Right ventricle myocardium inferior (tissue), 1 donor: ENCODE measurements at regions of chr21 and their contacts with region 1.

Region 1: DNA sequence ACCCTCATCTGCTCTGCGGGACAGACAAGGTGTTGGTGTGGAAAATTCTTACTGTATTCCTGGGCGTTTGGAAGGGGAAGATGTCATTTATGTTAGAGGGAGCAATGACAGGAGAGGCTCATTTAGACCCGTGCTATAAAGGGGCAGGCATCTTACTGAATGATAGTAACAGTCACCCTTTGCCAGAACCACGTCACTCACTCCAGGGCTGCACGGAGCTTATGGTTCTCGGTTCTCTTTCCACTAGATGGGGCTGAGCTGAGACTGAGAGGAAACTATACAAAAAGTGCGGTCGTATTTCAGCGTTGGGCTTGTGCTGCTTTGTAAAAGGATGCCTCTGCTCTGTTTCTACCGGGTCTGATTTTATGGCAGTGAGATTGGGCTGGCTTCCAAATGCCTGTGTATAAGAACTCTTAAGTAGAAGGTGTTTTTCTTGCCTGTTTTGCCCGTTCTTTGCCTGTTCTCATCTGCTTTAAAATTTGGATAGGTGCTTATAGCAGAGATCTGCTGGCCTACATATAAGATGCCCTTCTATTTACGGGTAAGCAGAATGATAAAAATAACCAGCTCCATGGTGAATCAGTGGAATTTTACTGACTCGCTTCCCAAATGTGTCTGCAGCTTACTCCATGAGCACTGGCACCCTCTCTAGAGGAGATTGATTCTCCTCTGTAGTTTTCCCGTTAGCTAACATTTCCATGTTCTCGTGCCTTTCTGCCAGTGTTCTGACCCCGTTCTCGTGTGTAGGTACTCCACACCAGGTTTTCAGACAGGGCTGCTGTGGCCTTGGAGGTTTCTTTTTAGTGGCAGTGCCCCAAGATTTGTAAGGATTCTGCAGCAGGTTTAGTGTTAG is 55.9 kb downstream of the MRPS6 start:
- DNase-seq: no peak
- ATAC-seq: peak; percentile 93

Region 2: DNA sequence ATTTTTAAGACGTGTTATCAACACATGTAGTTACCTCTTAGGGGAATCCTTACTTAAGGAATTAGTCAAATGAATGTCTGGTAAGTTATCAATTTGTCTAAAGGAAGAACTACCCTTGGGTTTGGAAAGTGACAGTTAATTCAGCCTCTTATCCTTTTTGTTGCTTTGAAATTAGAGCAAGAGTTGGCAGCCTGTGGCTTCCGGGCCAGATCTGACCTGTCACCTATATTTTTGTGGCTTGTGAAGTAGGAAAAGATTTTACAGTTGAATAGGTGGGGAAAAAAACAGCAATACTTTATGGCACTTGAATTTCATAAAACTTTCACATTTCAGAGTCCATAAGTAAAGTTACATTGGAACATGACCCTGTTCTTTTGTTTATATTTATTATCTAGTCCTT is 50.4 kb before region 1 on chr21:
- intact Hi-C with region 1: loop called (anchors 5 kb)
- DNase-seq: no peak
- ATAC-seq: no peak

Region 3: DNA sequence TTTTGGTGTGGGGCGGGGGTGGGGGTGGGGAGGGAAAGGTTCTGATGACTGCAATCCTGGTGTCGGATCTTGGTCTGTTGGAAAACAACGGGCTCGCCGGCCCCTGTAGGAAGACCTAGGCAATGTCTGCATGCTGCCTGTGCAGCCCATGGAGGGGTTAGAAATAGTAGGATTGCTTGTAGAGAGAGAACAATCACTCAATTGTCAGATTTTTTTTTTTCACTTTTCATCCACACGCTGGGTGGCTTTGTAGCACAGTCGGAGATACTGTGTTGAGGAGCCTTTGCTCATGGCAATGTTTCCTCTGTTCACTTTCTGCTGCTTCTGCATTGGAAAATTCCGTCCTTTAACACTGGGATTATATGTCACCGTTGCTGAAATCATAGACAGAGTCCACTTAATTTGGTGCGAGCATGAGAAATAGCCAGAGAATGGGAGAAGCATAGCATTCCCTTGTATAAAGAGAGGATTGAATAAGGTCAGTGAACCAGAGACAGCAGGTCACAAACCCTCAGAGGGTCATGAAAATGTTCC is 51.6 kb after region 1 on chr21:
- intact Hi-C with region 1: loop called (anchors 5 kb)
- DNase-seq: no peak
- ATAC-seq: peak; percentile 52

Region 4: GRCh38 chr21:34345091-34345871 is 216.0 kb after region 1 on chr21:
- intact Hi-C with region 1: loop called (anchors 5 kb)
- DNase-seq: no peak
- ATAC-seq: peak; percentile 40